Heart left ventricle (tissue), 16 donors: ENCODE measurements at regions of chr12 and their contacts with region 1.

Region 1: DNA sequence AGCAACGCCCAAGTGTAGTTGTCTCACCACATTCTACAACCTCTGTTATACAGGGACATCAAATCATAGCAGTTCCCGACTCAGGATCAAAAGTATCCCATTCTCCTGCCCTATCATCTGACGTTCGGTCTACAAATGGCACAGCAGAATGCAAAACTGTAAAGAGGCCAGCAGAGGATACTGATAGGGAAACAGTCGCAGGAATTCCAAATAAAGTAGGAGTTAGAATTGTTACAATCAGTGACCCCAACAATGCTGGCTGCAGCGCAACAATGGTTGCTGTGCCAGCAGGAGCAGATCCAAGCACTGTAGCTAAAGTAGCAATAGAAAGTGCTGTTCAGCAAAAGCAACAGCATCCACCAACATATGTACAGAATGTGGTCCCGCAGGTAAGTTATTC is 123.0 kb downstream of the ARID2 start:
- DNase-seq: peak in 4 of 5 donors; percentile 36 to 50 (median 44)
- ATAC-seq: peak; percentile 86 to 93 (median 88)
- H3K4me3 ChIP-seq: no peak overlapping the region
- H3K27ac ChIP-seq: peak overlapping the region in 4 of 12 donors; percentile 13 to 73 (median 48)
- H3K4me1 ChIP-seq: peaks cover 0 to 23% (median 11%) of the 10 kb centered on the region in 12 donors
- H3K27me3 ChIP-seq: no peaks in the 10 kb centered on the region
- CTCF ChIP-seq: no peak
- POLR2A ChIP-seq: no peak

Region 2: DNA sequence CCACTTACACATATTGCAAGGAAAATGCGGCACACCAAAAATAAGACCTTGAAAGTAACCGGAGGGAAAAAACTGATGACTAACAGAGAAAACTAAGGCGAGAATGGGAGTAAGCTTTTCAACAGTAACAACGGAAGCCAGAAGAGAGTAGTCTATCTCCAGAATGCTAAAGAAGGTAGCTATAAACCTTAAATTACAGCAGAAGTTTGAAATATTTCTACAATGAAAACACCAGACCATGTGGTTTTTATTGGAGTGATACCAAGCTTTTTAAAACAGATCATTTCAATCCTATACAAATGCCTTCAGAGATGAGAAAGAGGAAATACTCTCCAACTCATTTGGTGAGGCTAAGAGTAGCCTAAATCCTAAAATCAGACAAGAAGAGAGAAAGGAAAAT is 427.1 kb before region 1 on chr12:
- intact Hi-C with region 1: no loop called
- DNase-seq: no peak
- ATAC-seq: no peak
- H3K4me3 ChIP-seq: no peak overlapping the region
- H3K27ac ChIP-seq: no peak overlapping the region
- H3K4me1 ChIP-seq: peaks cover 0 to 16% (median 0%) of the 10 kb centered on the region in 12 donors
- H3K27me3 ChIP-seq: no peaks in the 10 kb centered on the region
- CTCF ChIP-seq: no peak
- POLR2A ChIP-seq: no peak

Region 3: DNA sequence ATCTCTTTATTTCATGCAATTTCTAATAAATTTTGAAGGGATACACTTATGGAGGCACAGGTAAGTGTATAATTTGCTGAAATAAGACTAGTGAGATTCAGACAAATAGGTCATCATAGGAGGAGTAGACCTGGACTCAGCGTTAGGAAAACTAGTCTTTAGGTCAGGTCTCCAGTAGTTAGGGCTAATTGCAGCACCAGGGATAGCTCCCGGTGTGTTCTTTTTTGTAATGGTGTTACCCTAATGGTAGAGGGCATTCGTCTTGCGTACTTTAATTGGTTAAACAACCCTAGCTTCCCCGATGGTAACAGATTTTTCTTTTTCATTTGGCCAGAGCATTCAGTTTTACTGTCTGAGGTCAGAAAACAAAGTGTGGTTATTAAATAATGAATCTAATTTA is 58.1 kb before region 1 on chr12:
- intact Hi-C with region 1: no loop called
- DNase-seq: no peak
- ATAC-seq: no peak
- H3K4me3 ChIP-seq: no peak overlapping the region
- H3K27ac ChIP-seq: no peak overlapping the region
- H3K4me1 ChIP-seq: peaks cover 0 to 20% (median 3%) of the 10 kb centered on the region in 12 donors
- H3K27me3 ChIP-seq: no peaks in the 10 kb centered on the region
- CTCF ChIP-seq: no peak
- POLR2A ChIP-seq: no peak

Region 4: DNA sequence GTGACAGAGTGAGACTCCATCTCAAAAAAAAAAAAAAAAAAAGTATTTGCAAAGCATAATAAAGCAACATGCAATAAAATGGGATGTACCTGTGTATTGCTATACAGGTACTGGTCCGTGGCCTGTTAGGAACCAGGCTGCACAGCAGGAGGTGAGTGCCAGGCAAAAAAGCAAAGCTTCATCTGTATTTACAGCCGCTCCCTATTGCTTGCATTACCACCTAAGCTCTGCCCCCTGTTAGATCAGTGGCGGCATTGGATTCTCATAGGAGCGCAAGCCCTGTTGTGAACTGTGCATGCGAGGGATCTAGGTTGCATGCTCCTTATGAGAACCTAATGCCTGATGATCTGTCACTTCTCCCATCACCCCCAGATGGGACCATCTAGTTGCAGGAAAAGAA is 24.6 kb after region 1 on chr12:
- intact Hi-C with region 1: loop called in 1 of 10 experiments (anchors 2 kb)
- DNase-seq: no peak
- ATAC-seq: no peak
- H3K4me3 ChIP-seq: no peak overlapping the region
- H3K27ac ChIP-seq: no peak overlapping the region
- H3K4me1 ChIP-seq: peaks cover 0 to 33% (median 19%) of the 10 kb centered on the region in 12 donors
- H3K27me3 ChIP-seq: no peaks in the 10 kb centered on the region
- CTCF ChIP-seq: no peak
- POLR2A ChIP-seq: no peak